ENCODE measurements at regions of chr13 and their contacts with region 1.

Region 1: GRCh38 chr13:111228262-111229144 is 91.9 kb upstream of the TEX29 start:
- DNase-seq: peak in 4 of 5 donors; percentile 71 to 83 (median 78)
- H3K4me3 ChIP-seq: peak overlapping the region in 1 of 3 donors; percentile 13
- H3K27ac ChIP-seq: peak overlapping the region; percentile 38 to 59
- H3K4me1 ChIP-seq: peaks cover 0 to 14% (median 7%) of the 10 kb centered on the region in 3 donors
- H3K27me3 ChIP-seq: no peaks in the 10 kb centered on the region
- CTCF ChIP-seq: no peak

Region 2: GRCh38 chr13:111076156-111077013 is 152.1 kb before region 1 on chr13:
- intact Hi-C with region 1: loop called (anchors 10 kb)
- DNase-seq: no peak
- H3K4me3 ChIP-seq: no peak overlapping the region
- H3K27ac ChIP-seq: no peak overlapping the region
- H3K4me1 ChIP-seq: no peaks in the 10 kb centered on the region
- H3K27me3 ChIP-seq: no peaks in the 10 kb centered on the region
- CTCF ChIP-seq: no peak

Measured in kidney (tissue), 22 donors.